CD4-positive, alpha-beta memory T cell (primary cell): ENCODE measurements at regions of chr13 and their contacts with region 1.

Region 1: DNA sequence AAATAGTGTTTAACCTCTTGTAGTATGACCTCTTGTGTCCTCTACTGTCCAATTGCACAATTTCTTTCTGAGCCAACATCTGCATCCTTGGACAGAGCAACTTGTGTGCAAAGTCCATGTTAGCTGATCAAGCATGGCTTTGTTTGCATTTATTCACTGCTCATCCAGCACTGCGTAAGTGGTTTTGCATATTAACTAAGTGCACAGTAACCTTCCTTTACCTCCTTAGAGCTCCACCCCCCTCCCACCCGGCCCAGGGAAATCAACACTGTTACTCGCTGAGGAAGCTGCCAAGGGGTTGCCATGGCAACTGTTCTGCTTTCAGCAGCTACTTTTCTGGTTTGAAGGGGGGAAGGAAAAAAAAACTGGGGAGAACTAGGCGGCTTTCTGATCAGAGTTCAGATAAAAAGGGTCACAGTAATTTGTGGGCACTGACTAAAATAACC is 153.5 kb upstream of the KLF12 start:
- DNase-seq: peak; percentile 87 to 98 (median 93)
- H3K4me3 ChIP-seq: peak overlapping the region; percentile 1 to 5
- H3K4me3 Mint-ChIP-seq: peak overlapping the region; percentile 75 to 89 (median 84)
- H3K27ac ChIP-seq: peak overlapping the region; percentile 56
- H3K27ac Mint-ChIP-seq: peak overlapping the region; percentile 94 to 98 (median 97)
- H3K4me1 ChIP-seq: peaks cover 53% of the 10 kb centered on the region
- H3K4me1 Mint-ChIP-seq: peaks cover 50 to 72% (median 60%) of the 10 kb centered on the region in 4 donors
- H3K27me3 ChIP-seq: no peaks in the 10 kb centered on the region
- H3K27me3 Mint-ChIP-seq: peaks cover 0 to 3% of the 10 kb centered on the region in 2 donors

Region 2: DNA sequence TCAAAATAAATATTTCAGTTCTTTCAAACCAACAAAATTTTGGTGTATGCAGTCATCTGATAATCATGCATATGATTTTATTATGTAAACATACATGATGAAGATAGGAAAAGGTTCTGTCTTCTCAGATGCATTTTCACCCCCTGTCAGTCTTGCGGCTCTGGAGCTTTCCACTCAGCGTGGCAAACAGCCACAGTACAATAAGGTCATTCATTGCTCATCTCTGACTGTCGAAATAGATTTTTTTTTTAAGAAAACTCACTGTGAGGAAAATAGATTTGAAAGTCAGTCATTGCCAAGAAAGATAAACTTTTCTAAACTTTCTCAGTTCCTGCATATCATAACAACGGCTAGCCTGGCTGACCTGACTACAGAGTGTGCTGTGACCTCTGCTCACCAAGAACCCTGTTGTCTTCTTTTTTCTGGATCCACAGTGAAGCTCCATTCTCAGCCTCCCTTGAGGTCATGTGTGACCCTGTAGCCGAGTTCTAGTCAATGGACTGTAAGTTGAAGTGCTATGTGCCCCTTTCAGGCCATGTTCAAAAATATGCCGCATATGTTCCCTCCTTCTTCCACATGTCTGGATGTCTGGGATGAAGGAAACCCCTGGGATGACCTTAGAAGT is 709.4 kb before region 1 on chr13:
- CTCF ChIA-PET with region 1: no interaction called
- POLR2A ChIA-PET with region 1: no interaction called
- intact Hi-C with region 1: no loop called
- DNase-seq: no peak
- H3K4me3 ChIP-seq: no peak overlapping the region
- H3K4me3 Mint-ChIP-seq: no peak overlapping the region
- H3K27ac ChIP-seq: no peak overlapping the region
- H3K27ac Mint-ChIP-seq: no peak overlapping the region
- H3K4me1 ChIP-seq: no peaks in the 10 kb centered on the region
- H3K4me1 Mint-ChIP-seq: peaks cover 0 to 1% (median 0%) of the 10 kb centered on the region in 4 donors
- H3K27me3 ChIP-seq: no peaks in the 10 kb centered on the region
- H3K27me3 Mint-ChIP-seq: peaks cover 0 to 4% of the 10 kb centered on the region in 2 donors

Region 3: GRCh38 chr13:73835138-73835721 is 452.5 kb before region 1 on chr13:
- CTCF ChIA-PET with region 1: interaction called, 79 read pairs
- POLR2A ChIA-PET with region 1: interaction called, 15 read pairs
- intact Hi-C with region 1: loop called (anchors 1 kb)
- DNase-seq: peak in 4 of 5 donors; percentile 45 to 56 (median 49)
- H3K4me3 ChIP-seq: no peak overlapping the region
- H3K4me3 Mint-ChIP-seq: no peak overlapping the region
- H3K27ac ChIP-seq: no peak overlapping the region
- H3K27ac Mint-ChIP-seq: no peak overlapping the region
- H3K4me1 ChIP-seq: peaks cover 42% of the 10 kb centered on the region
- H3K4me1 Mint-ChIP-seq: peaks cover 34 to 69% (median 47%) of the 10 kb centered on the region in 4 donors
- H3K27me3 ChIP-seq: no peaks in the 10 kb centered on the region
- H3K27me3 Mint-ChIP-seq: no peaks in the 10 kb centered on the region

Region 4: DNA sequence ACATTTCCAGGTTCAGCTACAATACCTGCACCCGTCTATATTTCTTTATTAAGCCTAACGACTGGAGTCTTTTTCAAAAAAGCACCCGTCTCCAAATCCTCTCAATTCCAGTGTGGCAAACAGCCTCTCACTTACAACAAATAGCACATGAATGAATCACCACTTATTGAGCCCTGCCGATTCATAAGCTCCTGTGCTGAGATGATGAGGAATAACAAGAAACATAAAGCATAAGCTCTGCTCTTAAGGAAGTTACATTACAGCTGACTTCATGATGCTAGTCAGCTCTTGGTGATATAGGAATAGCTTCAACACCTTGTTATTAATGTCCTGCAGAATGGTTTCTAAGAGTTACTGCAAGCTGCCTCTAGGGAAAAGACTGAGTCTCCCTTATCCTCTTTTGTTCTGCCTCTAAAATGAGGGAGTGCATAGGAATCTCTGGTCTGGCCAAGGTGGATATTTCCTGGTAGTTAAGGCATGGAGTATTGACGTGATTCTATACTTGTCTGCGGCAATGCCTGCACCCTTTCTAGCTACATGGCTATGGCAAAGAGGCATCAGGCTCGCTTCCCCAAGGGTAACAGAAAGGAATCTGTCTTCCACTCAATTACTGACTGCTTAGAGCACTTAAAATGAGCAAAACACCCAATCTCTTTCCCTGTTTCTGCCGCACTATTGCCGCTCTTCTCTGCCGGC is 349.2 kb before region 1 on chr13:
- CTCF ChIA-PET with region 1: interaction called, 30 read pairs
- POLR2A ChIA-PET with region 1: interaction called, 3 read pairs
- intact Hi-C with region 1: loop called (anchors 1 kb)
- DNase-seq: no peak
- H3K4me3 ChIP-seq: no peak overlapping the region
- H3K4me3 Mint-ChIP-seq: no peak overlapping the region
- H3K27ac ChIP-seq: no peak overlapping the region
- H3K27ac Mint-ChIP-seq: peak overlapping the region in 4 of 7 donors; percentile 8 to 46 (median 28)
- H3K4me1 ChIP-seq: peaks cover 44% of the 10 kb centered on the region
- H3K4me1 Mint-ChIP-seq: peaks cover 61 to 88% (median 76%) of the 10 kb centered on the region in 4 donors
- H3K27me3 ChIP-seq: no peaks in the 10 kb centered on the region
- H3K27me3 Mint-ChIP-seq: no peaks in the 10 kb centered on the region

Region 5: DNA sequence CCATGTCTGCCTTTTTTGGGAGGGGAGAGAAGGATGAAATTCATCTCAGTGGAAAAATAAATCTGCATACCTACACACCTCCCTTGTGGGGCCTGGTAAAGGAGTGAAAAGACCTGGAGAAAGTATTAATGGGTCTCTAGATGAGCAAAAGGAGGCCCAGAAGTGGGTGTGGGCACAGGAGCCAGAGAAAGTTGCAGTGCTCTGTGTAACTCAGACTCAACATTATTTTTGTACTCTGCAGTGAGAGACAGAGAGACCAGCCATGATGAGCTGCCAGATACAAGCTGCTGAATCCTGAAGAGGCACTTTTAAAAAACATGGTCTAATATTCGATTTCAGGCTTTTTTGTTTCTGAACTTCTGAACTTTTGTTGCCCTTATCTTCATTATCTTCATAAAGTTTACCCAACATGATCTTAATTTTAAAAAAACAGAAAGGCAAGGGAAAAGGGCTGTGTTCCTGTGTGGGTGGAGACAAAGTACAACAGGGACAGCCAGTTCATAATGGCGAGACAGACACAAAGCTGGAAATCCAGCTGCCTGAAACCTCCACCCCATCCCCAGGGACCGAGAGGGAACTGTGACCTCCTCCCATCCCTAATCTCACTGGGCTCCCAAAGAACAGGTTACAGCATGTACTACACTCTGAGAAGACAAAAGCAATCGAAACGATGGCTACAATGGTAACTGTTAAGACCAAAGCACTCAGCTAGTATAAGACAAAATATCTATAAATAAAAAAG is 230.8 kb before region 1 on chr13:
- CTCF ChIA-PET with region 1: interaction called, 32 read pairs
- POLR2A ChIA-PET with region 1: interaction called, 26 read pairs
- intact Hi-C with region 1: loop called (anchors 2 kb)
- DNase-seq: no peak
- H3K4me3 ChIP-seq: no peak overlapping the region
- H3K4me3 Mint-ChIP-seq: peak overlapping the region in 5 of 8 donors; percentile 8 to 47 (median 17)
- H3K27ac ChIP-seq: no peak overlapping the region
- H3K27ac Mint-ChIP-seq: peak overlapping the region in 4 of 7 donors; percentile 24 to 61 (median 38)
- H3K4me1 ChIP-seq: peaks cover 95% of the 10 kb centered on the region
- H3K4me1 Mint-ChIP-seq: peaks cover 67 to 92% (median 83%) of the 10 kb centered on the region in 4 donors
- H3K27me3 ChIP-seq: no peaks in the 10 kb centered on the region
- H3K27me3 Mint-ChIP-seq: no peaks in the 10 kb centered on the region

Region 6: GRCh38 chr13:74133657-74134201 is 154.0 kb before region 1 on chr13:
- CTCF ChIA-PET with region 1: interaction called, 204 read pairs
- POLR2A ChIA-PET with region 1: interaction called, 265 read pairs
- intact Hi-C with region 1: loop called (anchors 1 kb)
- DNase-seq: peak; percentile 89 to 98 (median 95)
- H3K4me3 ChIP-seq: peak overlapping the region; percentile 86 to 90
- H3K4me3 Mint-ChIP-seq: peak overlapping the region; percentile 96 to 100 (median 98)
- H3K27ac ChIP-seq: peak overlapping the region; percentile 94
- H3K27ac Mint-ChIP-seq: peak overlapping the region; percentile 97 to 100 (median 99)
- H3K4me1 ChIP-seq: peaks cover 41% of the 10 kb centered on the region
- H3K4me1 Mint-ChIP-seq: peaks cover 22 to 49% (median 28%) of the 10 kb centered on the region in 4 donors
- H3K27me3 ChIP-seq: no peaks in the 10 kb centered on the region
- H3K27me3 Mint-ChIP-seq: peaks cover 1 to 3% of the 10 kb centered on the region in 2 donors

Region 7: GRCh38 chr13:74246487-74246886 is 41.3 kb before region 1 on chr13:
- CTCF ChIA-PET with region 1: interaction called, 50 read pairs
- POLR2A ChIA-PET with region 1: interaction called, 26 read pairs
- intact Hi-C with region 1: loop called (anchors 1 kb)
- DNase-seq: peak in 2 of 5 donors; percentile 26 to 56
- H3K4me3 ChIP-seq: no peak overlapping the region
- H3K4me3 Mint-ChIP-seq: peak overlapping the region; percentile 53 to 84 (median 69)
- H3K27ac ChIP-seq: peak overlapping the region; percentile 54
- H3K27ac Mint-ChIP-seq: peak overlapping the region; percentile 87 to 97 (median 94)
- H3K4me1 ChIP-seq: peaks cover 96% of the 10 kb centered on the region
- H3K4me1 Mint-ChIP-seq: peaks cover 79 to 100% (median 91%) of the 10 kb centered on the region in 4 donors
- H3K27me3 ChIP-seq: no peaks in the 10 kb centered on the region
- H3K27me3 Mint-ChIP-seq: no peaks in the 10 kb centered on the region

Region 8: GRCh38 chr13:74464670-74465069 is 176.9 kb after region 1 on chr13:
- CTCF ChIA-PET with region 1: no interaction called
- POLR2A ChIA-PET with region 1: no interaction called
- intact Hi-C with region 1: no loop called
- DNase-seq: no peak
- H3K4me3 ChIP-seq: no peak overlapping the region
- H3K4me3 Mint-ChIP-seq: no peak overlapping the region
- H3K27ac ChIP-seq: no peak overlapping the region
- H3K27ac Mint-ChIP-seq: no peak overlapping the region
- H3K4me1 ChIP-seq: no peaks in the 10 kb centered on the region
- H3K4me1 Mint-ChIP-seq: no peaks in the 10 kb centered on the region
- H3K27me3 ChIP-seq: no peaks in the 10 kb centered on the region
- H3K27me3 Mint-ChIP-seq: peaks cover 4 to 12% of the 10 kb centered on the region in 2 donors